Activated CD4-positive, alpha-beta memory T cell treated with anti-CD3 and anti-CD28 coated beads for 36 hours (primary cell): ENCODE measurements at regions of chr5 and their contacts with region 1.

Region 1: GRCh38 chr5:39376293-39376714 is 12.0 kb upstream of the C9 start:
- DNase-seq: peak; percentile 32
- H3K4me3 Mint-ChIP-seq: no peak overlapping the region
- H3K27ac Mint-ChIP-seq: no peak overlapping the region
- H3K4me1 Mint-ChIP-seq: no peaks in the 10 kb centered on the region
- H3K27me3 Mint-ChIP-seq: no peaks in the 10 kb centered on the region

Region 2: GRCh38 chr5:38697013-38697412 is 679.3 kb before region 1 on chr5:
- CTCF ChIA-PET with region 1: no interaction called
- POLR2A ChIA-PET with region 1: no interaction called
- intact Hi-C with region 1: no loop called
- DNase-seq: no peak
- H3K4me3 Mint-ChIP-seq: no peak overlapping the region
- H3K27ac Mint-ChIP-seq: no peak overlapping the region
- H3K4me1 Mint-ChIP-seq: no peaks in the 10 kb centered on the region
- H3K27me3 Mint-ChIP-seq: peaks cover 9% of the 10 kb centered on the region

Region 3: DNA sequence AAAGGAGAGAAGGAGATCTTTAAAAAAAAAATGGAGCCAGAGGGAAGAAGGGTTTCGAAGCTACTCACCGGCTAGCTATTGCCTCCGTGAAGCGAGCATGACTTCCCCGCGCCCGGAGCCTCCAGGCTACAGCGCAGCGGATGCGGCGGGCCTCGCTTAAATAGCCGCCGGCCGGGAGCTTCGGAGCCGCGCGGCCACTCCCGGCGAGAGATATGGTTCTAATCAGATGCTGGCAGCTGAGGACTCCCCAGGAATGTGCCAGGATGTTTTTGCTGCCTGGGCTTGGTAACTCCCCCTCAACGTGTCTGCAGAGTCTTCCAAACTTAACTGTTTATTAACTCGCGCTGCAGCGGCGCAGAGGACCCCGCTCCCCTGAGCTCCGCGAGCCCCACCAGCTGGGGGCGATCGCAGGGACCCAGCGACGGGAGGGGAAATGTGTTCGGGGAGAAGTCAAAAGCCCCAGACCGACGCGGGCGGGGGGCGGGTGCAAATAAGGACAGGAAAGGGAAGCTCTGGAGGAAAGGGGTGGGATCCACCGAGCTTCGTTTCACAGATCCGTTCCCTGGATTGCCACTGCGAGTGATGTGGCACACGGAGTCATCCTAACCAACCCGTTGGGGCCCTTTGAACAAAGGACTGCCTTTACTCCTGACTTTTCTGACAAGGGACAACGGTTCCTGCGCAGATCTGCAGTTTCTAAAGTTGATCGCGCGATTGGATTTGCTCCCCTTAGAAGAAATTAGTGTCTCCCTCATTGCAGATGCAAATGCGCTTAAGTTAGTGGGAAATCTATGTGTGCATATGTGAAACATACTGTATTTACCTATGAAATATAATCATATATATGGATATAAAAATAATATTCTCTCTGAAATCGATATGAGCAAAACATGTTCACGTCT is 48.7 kb after region 1 on chr5 and contains the start of gene DAB2:
- CTCF ChIA-PET with region 1: interaction called, 15 read pairs
- POLR2A ChIA-PET with region 1: no interaction called
- intact Hi-C with region 1: no loop called
- DNase-seq: peak; percentile 50
- H3K4me3 Mint-ChIP-seq: peak within 1 kb of the TSS; percentile 72
- H3K27ac Mint-ChIP-seq: no peak within 1 kb of the TSS
- H3K4me1 Mint-ChIP-seq: peaks cover 4% of the 10 kb centered on the region
- H3K27me3 Mint-ChIP-seq: peaks cover 35% of the 10 kb centered on the region
- total RNA-seq, gene DAB2: not detected

Region 4: DNA sequence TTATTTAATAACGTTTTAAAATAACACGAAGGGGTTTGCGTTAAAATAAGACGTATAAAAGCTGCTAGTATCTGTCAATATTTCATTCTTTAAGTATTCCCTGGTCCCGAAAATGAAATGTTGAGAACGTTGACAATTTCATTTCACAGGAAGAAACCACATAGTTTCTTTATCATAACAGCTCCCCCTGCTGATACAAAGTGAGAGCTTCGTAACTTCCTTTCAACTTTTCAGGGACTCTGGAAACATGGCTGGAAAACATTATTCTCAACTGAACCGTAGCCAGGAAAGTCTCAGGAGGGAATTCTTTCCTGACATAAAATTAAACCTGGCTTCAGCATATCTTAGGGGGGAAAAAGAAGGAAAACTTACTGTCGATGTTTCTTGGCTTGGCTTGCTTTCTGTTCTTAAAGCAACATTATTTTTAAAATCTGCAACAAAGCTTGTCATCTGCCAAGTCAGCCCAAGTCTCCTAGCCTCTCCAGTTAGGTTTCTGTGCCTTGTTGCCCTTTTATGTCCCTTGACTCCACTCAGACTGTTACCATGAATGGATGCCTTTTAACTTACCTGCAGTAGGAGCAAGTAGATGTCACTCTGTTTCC is 171.3 kb after region 1 on chr5:
- CTCF ChIA-PET with region 1: interaction called, 73 read pairs
- POLR2A ChIA-PET with region 1: no interaction called
- intact Hi-C with region 1: loop called (anchors 1 kb)
- DNase-seq: no peak
- H3K4me3 Mint-ChIP-seq: no peak overlapping the region
- H3K27ac Mint-ChIP-seq: no peak overlapping the region
- H3K4me1 Mint-ChIP-seq: peaks cover 7% of the 10 kb centered on the region
- H3K27me3 Mint-ChIP-seq: peaks cover 4% of the 10 kb centered on the region

Region 5: GRCh38 chr5:39570403-39571027 is 194.2 kb after region 1 on chr5:
- CTCF ChIA-PET with region 1: interaction called, 42 read pairs
- POLR2A ChIA-PET with region 1: no interaction called
- intact Hi-C with region 1: loop called (anchors 1 kb)
- DNase-seq: no peak
- H3K4me3 Mint-ChIP-seq: no peak overlapping the region
- H3K27ac Mint-ChIP-seq: no peak overlapping the region
- H3K4me1 Mint-ChIP-seq: no peaks in the 10 kb centered on the region
- H3K27me3 Mint-ChIP-seq: peaks cover 2% of the 10 kb centered on the region

Region 6: GRCh38 chr5:39578887-39579497 is 202.7 kb after region 1 on chr5:
- CTCF ChIA-PET with region 1: interaction called, 12 read pairs
- POLR2A ChIA-PET with region 1: no interaction called
- intact Hi-C with region 1: no loop called
- DNase-seq: no peak
- H3K4me3 Mint-ChIP-seq: no peak overlapping the region
- H3K27ac Mint-ChIP-seq: no peak overlapping the region
- H3K4me1 Mint-ChIP-seq: peaks cover 6% of the 10 kb centered on the region
- H3K27me3 Mint-ChIP-seq: no peaks in the 10 kb centered on the region